ENCODE measurements at regions of chr13 and their contacts with region 1.

Region 1: GRCh38 chr13:29362849-29363604 is 232.5 kb downstream of the SLC7A1 start:
- DNase-seq: peak; percentile 79
- CTCF ChIP-seq: peak; percentile 89

Region 2: DNA sequence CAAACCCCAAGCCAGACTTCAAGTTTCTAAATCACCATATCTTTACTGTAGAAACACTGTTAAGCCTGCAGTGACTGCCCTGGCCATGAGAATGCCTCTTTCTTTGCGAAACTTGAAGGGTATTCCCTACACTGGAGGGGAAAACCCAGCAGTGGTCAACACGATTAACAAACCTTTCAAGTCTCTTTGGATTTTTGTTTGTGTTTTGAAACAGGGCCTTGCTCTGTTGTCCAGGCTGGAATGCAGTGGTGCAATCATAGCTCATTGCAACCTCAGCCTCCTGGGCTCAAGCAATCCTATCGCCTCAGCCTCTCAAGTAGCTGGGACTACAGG is 721.5 kb before region 1 on chr13:
- in situ Hi-C with region 1: no loop called
- DNase-seq: peak; percentile 46
- CTCF ChIP-seq: no peak

Region 3: DNA sequence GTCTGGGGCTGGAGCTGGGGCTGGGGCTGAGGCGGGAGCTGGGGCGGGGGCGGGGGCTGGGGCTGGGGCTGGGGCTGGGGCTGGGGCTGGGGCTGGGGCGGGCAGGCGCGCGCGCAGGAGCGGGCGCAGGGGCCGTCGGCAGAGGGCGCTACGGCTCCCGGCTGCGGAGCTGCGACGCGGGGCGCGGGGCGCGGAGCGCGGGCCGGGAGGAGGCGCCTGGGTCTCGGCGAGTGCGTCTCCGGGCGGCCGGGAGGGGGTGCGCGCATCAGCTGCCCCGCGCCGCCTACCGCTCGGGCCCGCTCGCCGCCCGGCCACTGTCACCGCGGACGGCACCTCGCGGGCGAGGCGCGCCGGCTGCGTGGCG is 543.3 kb before region 1 on chr13:
- in situ Hi-C with region 1: loop called (anchors 25 kb)
- DNase-seq: peak; percentile 87
- CTCF ChIP-seq: peak; percentile 74

Region 4: DNA sequence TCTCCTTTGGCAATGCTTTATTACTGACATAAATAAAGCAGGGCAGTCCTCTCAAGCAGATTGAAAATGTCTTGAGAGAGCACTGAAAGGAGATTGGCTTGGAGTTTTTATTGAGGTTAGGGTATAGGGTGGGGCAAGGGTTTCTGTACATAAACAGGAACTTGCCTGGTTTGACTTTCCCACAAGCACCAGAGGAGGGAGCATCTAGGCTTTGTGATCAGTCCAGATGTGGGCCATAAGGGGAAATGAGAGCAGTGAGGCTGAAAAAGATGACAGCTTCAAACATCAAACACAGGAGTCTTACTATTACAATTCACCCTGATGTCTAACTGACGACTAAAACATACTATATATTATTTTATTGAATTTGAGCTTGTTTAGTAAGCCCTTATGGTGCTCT is 282.0 kb before region 1 on chr13:
- in situ Hi-C with region 1: loop called (anchors 25 kb)
- DNase-seq: peak; percentile 35
- CTCF ChIP-seq: peak; percentile 64